Ovary (tissue), 10 donors: ENCODE measurements at regions of chr4 and their contacts with region 1.

Region 1: GRCh38 chr4:186999686-187000085 is 276.0 kb upstream of the FAT1 start:
- DNase-seq: no peak
- H3K4me3 ChIP-seq: no peak overlapping the region
- H3K27ac ChIP-seq: no peak overlapping the region
- H3K4me1 ChIP-seq: no peaks in the 10 kb centered on the region
- H3K27me3 ChIP-seq: no peaks in the 10 kb centered on the region
- CTCF ChIP-seq: no peak
- EP300 ChIP-seq: no peak
- POLR2A ChIP-seq: no peak

Region 2: GRCh38 chr4:187632260-187632995 is 632.7 kb after region 1 on chr4:
- intact Hi-C with region 1: loop called in 1 of 4 experiments (anchors 5 kb)
- DNase-seq: no peak
- H3K4me3 ChIP-seq: no peak overlapping the region
- H3K27ac ChIP-seq: no peak overlapping the region
- H3K4me1 ChIP-seq: no peaks in the 10 kb centered on the region
- H3K27me3 ChIP-seq: no peaks in the 10 kb centered on the region
- CTCF ChIP-seq: no peak
- EP300 ChIP-seq: no peak
- POLR2A ChIP-seq: no peak